Naive thymus-derived CD8-positive, alpha-beta T cell (primary cell): ENCODE measurements at regions of chr2 and their contacts with region 1.

Region 1: GRCh38 chr2:65056215-65057053 is at the start of gene CEP68:
- DNase-seq: peak; percentile 87 to 97 (median 95)
- ATAC-seq: peak; percentile 86 to 87
- H3K4me3 Mint-ChIP-seq: peak within 1 kb of the TSS; percentile 81 to 100 (median 98)
- H3K27ac Mint-ChIP-seq: peak within 1 kb of the TSS; percentile 82 to 99 (median 97)
- H3K4me1 Mint-ChIP-seq: peaks cover 34 to 86% (median 78%) of the 10 kb centered on the region in 4 donors
- H3K27me3 Mint-ChIP-seq: no peaks in the 10 kb centered on the region
- polyA plus RNA-seq, gene CEP68: 26.6 to 39.1 (median 34.7) TPM

Region 2: GRCh38 chr2:64899081-64899865 is 157.2 kb before region 1 on chr2:
- POLR2A ChIA-PET with region 1: no interaction called
- DNase-seq: no peak
- ATAC-seq: no peak
- H3K4me3 Mint-ChIP-seq: peak overlapping the region in 1 of 10 donors; percentile 57
- H3K27ac Mint-ChIP-seq: peak overlapping the region in 1 of 10 donors; percentile 46
- H3K4me1 Mint-ChIP-seq: peaks cover 0 to 10% (median 1%) of the 10 kb centered on the region in 4 donors
- H3K27me3 Mint-ChIP-seq: peaks cover 5 to 21% (median 9%) of the 10 kb centered on the region in 5 donors

Region 3: GRCh38 chr2:65129826-65130663 is 73.6 kb after region 1 on chr2 and contains the start of gene RAB1A:
- POLR2A ChIA-PET with region 1: interaction called, 64 read pairs
- DNase-seq: peak; percentile 90 to 100 (median 98)
- ATAC-seq: peak; percentile 94
- H3K4me3 Mint-ChIP-seq: peak within 1 kb of the TSS; percentile 97 to 100 (median 99)
- H3K27ac Mint-ChIP-seq: peak within 1 kb of the TSS; percentile 95 to 100 (median 99)
- H3K4me1 Mint-ChIP-seq: peaks cover 16 to 44% (median 34%) of the 10 kb centered on the region in 4 donors
- H3K27me3 Mint-ChIP-seq: no peaks in the 10 kb centered on the region
- polyA plus RNA-seq, gene RAB1A: 38.8 to 45.4 (median 41.7) TPM